ENCODE measurements at regions of chr3 and their contacts with region 1.

Region 1: GRCh38 chr3:53709860-53710674 is 136.2 kb downstream of the CHDH start:
- DNase-seq: peak; percentile 75 to 90
- H3K4me3 ChIP-seq: no peak overlapping the region
- H3K27ac ChIP-seq: no peak overlapping the region
- H3K4me1 ChIP-seq: peaks cover 5 to 16% (median 11%) of the 10 kb centered on the region in 4 donors
- H3K27me3 ChIP-seq: no peaks in the 10 kb centered on the region
- CTCF ChIP-seq: peak in 5 of 7 experiments; percentile 64 to 84 (median 66)
- EP300 ChIP-seq: no peak
- POLR2A ChIP-seq: no peak

Region 2: GRCh38 chr3:53303957-53304356 is 406.1 kb before region 1 on chr3:
- intact Hi-C with region 1: loop called (anchors 5 kb)
- DNase-seq: no peak
- H3K4me3 ChIP-seq: no peak overlapping the region
- H3K27ac ChIP-seq: peak overlapping the region in 1 of 5 donors; percentile 31
- H3K4me1 ChIP-seq: peaks cover 0 to 27% (median 15%) of the 10 kb centered on the region in 4 donors
- H3K27me3 ChIP-seq: no peaks in the 10 kb centered on the region
- CTCF ChIP-seq: no peak
- EP300 ChIP-seq: no peak
- POLR2A ChIP-seq: no peak

Region 3: DNA sequence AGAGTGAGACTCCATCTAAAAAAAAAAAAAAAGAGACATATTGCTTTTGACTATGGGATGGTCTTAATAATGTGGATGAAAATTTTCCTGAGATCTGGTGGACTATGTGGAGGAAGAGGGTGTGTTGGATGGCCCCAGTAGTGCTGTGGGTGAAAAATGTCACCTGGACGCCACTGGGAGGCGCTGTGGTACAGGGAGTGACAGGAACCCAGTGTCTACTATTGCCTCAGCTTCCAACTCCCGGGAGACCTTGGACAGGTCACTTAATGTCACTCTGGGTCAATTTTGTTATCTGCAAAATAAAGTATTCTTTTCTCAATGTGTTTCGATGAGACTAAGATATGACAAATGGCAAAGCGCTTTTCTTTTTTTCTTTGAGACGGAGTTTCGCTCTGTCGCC is 335.0 kb before region 1 on chr3:
- intact Hi-C with region 1: loop called (anchors 5 kb)
- DNase-seq: peak; percentile 70 to 89
- H3K4me3 ChIP-seq: no peak overlapping the region
- H3K27ac ChIP-seq: no peak overlapping the region
- H3K4me1 ChIP-seq: no peaks in the 10 kb centered on the region
- H3K27me3 ChIP-seq: peaks cover 0 to 2% (median 0%) of the 10 kb centered on the region in 3 donors
- CTCF ChIP-seq: peak in 5 of 7 experiments; percentile 52 to 72 (median 68)
- EP300 ChIP-seq: no peak
- POLR2A ChIP-seq: no peak

Region 4: GRCh38 chr3:54008104-54008503 is 298.0 kb after region 1 on chr3:
- intact Hi-C with region 1: no loop called
- DNase-seq: no peak
- H3K4me3 ChIP-seq: no peak overlapping the region
- H3K27ac ChIP-seq: no peak overlapping the region
- H3K4me1 ChIP-seq: no peaks in the 10 kb centered on the region
- H3K27me3 ChIP-seq: no peaks in the 10 kb centered on the region
- CTCF ChIP-seq: no peak
- EP300 ChIP-seq: no peak
- POLR2A ChIP-seq: no peak